ENCODE measurements at regions of chr11 and their contacts with region 1.

Region 1: GRCh38 chr11:65013692-65014145 is 241 bp upstream of the ARL2 start:
- DNase-seq: peak; percentile 70 to 95
- H3K4me3 ChIP-seq: peak overlapping the region; percentile 81 to 91
- H3K27ac ChIP-seq: peak overlapping the region; percentile 99
- H3K4me1 ChIP-seq: peaks cover 3 to 17% of the 10 kb centered on the region in 2 donors
- H3K27me3 ChIP-seq: no peaks in the 10 kb centered on the region
- CTCF ChIP-seq: peak in 2 of 3 experiments; percentile 80

Region 2: DNA sequence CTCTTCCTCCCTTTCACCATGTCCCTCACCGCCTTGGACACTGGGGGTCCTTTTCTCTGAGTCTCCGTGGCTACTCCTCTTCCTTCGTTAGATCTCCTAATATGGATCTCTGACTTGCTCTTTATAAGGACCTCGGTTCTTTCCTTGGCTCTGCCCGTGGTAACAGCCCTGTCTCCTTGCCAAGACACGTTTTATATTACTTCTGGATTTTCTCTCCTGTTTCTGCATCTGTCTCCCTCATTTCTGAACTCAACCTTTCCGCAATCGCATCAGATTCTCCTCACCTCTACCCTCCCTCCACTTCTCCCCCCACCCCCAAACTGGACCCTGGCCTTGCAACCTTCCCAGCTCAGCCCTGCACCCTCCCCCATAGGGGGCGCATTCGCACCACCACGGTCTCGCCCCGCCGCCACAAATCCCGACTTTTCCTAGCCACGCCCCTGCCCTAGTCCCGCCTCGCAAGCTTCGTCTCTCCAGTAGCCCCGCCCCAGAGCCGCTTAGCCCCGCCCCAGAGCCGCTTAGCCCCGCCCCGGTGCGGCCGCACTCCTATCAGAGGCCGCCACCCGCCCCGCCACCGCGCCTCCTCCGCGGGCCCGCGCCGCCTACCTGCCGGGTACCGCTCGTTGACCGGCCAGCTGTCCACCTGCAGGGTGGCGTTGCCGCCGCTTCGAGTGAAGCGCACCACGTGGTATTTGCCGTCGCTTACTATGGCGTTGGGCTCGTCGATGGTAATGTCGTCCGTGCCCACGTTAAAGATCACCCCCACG is 383.7 kb before region 1 on chr11:
- intact Hi-C with region 1: no loop called
- DNase-seq: no peak
- H3K4me3 ChIP-seq: no peak overlapping the region
- H3K27ac ChIP-seq: no peak overlapping the region
- H3K4me1 ChIP-seq: no peaks in the 10 kb centered on the region
- H3K27me3 ChIP-seq: no peaks in the 10 kb centered on the region
- CTCF ChIP-seq: no peak

Region 3: DNA sequence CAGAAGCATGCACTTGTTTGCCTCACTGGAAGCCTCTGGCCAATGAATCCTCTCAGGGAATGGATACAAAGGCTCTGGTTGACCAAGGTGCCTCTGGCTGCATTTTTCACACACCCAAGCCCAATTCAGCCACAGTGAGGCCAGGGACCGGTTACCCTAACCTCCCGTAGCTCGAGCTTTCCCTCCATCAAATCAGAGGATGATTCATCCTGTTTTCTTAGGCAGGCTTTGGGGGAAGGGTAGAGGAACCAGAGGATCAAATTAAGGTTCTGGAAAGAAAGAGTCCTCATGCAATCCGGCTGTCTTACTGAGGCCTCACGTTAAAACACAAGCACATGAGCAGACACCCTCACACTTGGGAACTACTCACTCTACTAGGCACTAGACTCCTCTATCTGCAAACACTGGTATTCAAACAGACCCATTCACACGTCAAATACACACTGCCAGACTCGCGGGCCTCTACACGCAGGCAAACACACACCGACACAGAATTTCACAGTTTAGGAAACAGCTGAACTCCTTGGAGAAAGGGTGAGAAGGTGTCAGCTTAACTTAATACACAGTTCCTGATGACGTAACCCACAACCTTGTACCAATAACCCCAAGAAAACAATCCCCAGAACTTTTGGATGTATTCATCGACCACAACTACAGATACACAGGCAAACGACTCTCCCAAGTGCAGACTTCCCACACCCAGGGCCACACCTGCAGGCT is 303.1 kb before region 1 on chr11:
- intact Hi-C with region 1: no loop called
- DNase-seq: no peak
- H3K4me3 ChIP-seq: no peak overlapping the region
- H3K27ac ChIP-seq: no peak overlapping the region
- H3K4me1 ChIP-seq: peaks cover 0 to 3% of the 10 kb centered on the region in 2 donors
- H3K27me3 ChIP-seq: peaks cover 30% of the 10 kb centered on the region
- CTCF ChIP-seq: no peak

Region 4: DNA sequence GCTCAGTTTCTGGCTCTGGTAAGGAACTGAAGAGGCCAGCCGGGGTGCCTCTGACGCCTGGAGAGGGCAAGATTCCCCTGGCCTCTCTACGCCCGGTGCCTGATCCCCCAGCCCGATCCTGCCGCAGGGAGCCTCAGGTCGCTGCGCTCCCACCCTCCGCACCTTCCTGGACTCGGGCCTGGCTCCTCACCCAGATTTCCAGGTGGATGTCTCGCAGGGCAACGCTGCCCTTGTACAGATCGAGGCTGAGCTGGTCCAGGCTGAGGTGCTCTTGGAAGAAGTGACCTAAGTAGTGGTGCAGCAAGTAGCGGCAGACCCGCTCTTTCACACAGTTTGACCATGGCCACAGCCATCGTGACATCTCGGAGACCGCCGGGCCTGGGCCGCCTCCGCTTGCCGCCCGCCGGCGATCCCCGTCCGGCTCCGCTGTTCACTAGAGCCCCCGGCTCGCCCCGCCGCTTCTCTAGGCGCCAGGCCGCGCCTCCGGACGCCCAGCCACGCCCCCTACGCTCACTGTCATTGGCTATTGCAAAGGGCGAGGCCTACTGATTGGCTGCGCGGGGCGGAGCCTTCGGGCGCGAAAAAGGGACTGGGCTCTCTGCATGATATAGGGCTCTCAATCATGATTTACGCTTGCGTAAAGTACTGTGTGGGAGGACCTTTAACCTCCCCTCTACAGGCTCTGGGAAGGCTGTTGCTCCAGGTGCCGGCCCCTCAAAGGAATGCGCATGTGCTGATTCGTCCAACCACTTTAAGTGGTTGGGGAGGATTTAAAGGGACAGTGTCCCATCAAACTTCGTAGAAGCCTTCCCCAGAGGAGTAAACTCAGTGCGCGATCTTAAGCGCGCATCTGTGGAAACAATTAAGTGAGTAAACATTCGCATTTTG is 96.7 kb before region 1 on chr11 and contains the start of gene ATG2A:
- intact Hi-C with region 1: loop called (anchors 1 kb)
- DNase-seq: peak; percentile 99 to 100
- H3K4me3 ChIP-seq: peak within 1 kb of the TSS; percentile 92 to 94
- H3K27ac ChIP-seq: peak within 1 kb of the TSS; percentile 75 to 76
- H3K4me1 ChIP-seq: peaks cover 6 to 19% of the 10 kb centered on the region in 2 donors
- H3K27me3 ChIP-seq: no peaks in the 10 kb centered on the region
- CTCF ChIP-seq: no peak
- total RNA-seq, gene ATG2A: 39.5 TPM

Region 5: DNA sequence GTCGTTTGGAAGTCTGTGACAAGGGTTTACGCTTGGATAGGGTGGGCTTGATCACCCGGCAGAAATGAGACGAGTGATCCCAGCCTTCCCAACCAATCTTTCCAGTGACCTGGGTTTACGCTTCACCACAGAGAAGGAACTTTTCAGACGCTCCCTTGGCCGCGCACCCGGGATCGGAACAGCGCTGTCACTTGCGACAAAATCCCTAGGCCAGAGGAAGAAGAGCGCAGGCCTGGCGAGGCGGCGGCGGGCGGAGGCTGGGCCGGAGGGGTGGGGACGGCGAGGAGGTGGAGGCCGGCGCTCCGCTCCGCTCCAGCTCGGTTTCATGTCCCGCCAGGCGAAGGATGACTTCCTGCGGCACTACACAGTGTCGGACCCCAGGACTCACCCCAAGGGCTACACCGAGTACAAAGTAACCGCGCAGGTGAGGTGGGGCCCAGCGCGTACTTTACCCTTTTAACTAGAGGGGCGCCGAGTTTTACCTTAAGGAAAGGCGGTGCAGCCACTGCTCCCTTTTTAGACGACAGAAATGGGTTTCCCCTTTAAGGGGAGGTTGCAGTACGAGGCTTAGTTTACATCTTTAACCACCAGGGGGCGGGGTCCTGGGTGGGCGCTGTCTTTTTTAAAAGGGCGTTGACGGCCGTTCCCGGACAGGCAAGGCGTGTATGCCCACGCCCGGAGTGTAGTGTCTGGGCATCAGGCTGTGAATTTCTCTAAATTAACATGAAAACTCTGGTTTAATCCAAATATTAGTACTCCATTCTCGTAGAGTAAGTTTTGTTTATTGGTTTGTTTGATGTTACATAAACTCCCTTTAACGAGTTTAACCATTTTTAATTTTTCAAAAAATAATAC is 13.7 kb after region 1 on chr11 and contains the start of gene SNX15:
- intact Hi-C with region 1: loop called (anchors 1 kb)
- DNase-seq: peak; percentile 72 to 96
- H3K4me3 ChIP-seq: peak within 1 kb of the TSS; percentile 54 to 64
- H3K27ac ChIP-seq: peak within 1 kb of the TSS; percentile 66 to 83
- H3K4me1 ChIP-seq: peaks cover 4 to 11% of the 10 kb centered on the region in 2 donors
- H3K27me3 ChIP-seq: no peaks in the 10 kb centered on the region
- CTCF ChIP-seq: peak; percentile 61 to 85 (median 78)
- total RNA-seq, gene SNX15: 25.1 TPM

Region 6: GRCh38 chr11:65083834-65084597 is 70.3 kb after region 1 on chr11 and contains the starts of genes CDCA5 and ZFPL1:
- intact Hi-C with region 1: loop called (anchors 1 kb)
- DNase-seq: peak; percentile 77 to 97
- H3K4me3 ChIP-seq: peak within 1 kb of the TSS; percentile 85 to 90
- H3K27ac ChIP-seq: peak within 1 kb of the TSS; percentile 93 to 97
- H3K4me1 ChIP-seq: peaks cover 10% of the 10 kb centered on the region in 2 donors
- H3K27me3 ChIP-seq: no peaks in the 10 kb centered on the region
- CTCF ChIP-seq: no peak
- total RNA-seq, gene CDCA5: not detected
- total RNA-seq, gene ZFPL1: 93.6 TPM

Region 7: DNA sequence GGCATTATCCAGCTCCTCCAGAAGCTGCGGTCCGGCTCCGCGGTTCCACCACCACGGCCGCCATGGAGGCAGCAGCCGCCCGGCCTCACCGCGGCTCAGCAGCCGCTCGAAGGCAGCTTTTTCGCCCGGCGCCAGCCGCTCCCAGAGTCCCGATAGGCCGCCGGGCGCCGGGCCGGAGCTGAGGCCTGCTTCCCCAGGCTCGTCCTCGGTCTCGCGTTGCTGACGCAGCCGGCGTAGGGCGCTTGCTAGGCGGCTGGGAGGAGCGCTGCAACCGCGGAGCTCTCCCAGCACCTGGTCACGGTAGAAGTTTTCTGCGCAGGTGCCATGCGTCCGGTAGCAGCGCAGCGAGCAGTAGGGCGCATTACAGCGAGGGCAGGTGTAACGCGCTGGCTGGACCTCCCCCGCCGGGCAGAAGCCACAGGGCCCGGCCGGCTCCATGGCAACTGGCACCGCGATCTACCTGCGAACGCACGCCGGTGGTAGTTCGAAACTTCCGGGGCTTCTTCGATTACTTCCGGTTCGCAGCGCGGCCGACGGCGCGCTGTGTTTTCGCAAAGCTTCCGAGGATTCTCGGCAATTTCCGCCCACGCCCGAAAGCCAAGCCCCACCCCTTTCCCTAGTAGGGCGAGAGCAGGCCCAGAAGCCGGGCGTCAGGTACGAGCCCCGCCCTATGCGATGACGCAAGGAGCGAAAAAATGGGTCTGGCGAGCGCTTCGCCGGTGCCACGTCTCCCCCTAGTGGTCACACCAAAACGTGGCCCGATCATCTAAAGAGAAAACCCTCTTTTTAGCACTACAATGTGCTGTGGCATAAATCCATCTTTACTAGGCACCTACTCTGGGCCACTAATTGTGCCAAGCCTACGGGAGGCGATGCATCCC is 103.7 kb after region 1 on chr11 and contains the start of gene ZNHIT2:
- intact Hi-C with region 1: loop called (anchors 1 kb)
- DNase-seq: peak; percentile 96 to 100
- H3K4me3 ChIP-seq: peak within 1 kb of the TSS; percentile 87 to 97
- H3K27ac ChIP-seq: peak within 1 kb of the TSS; percentile 71 to 93
- H3K4me1 ChIP-seq: peaks cover 27 to 33% of the 10 kb centered on the region in 2 donors
- H3K27me3 ChIP-seq: no peaks in the 10 kb centered on the region
- CTCF ChIP-seq: peak; percentile 92 to 97 (median 93)
- total RNA-seq, gene ZNHIT2: 35.3 TPM

Measured in ascending aorta (tissue), 2 donors.